CD8-positive, alpha-beta T cell (primary cell): ENCODE measurements at regions of chr18 and their contacts with region 1.

Region 1: GRCh38 chr18:13539050-13539449 is 187.3 kb downstream of the FAM210A start:
- DNase-seq: peak; percentile 15 to 89 (median 64)
- ATAC-seq: peak; percentile 91
- H3K4me3 ChIP-seq: peak overlapping the region in 1 of 2 experiments; percentile 6
- H3K4me3 Mint-ChIP-seq: peak overlapping the region; percentile 63
- H3K27ac ChIP-seq: peak overlapping the region; percentile 63 to 83
- H3K27ac Mint-ChIP-seq: peak overlapping the region; percentile 91
- H3K4me1 ChIP-seq: peaks cover 66% of the 10 kb centered on the region
- H3K4me1 Mint-ChIP-seq: peaks cover 85% of the 10 kb centered on the region
- H3K27me3 ChIP-seq: no peaks in the 10 kb centered on the region
- H3K27me3 Mint-ChIP-seq: no peaks in the 10 kb centered on the region
- CTCF ChIP-seq: no peak

Region 2: GRCh38 chr18:11607906-11608305 is 1931.1 kb before region 1 on chr18:
- CTCF ChIA-PET with region 1: no interaction called
- POLR2A ChIA-PET with region 1: no interaction called
- intact Hi-C with region 1: no loop called
- DNase-seq: no peak
- ATAC-seq: no peak
- H3K4me3 ChIP-seq: no peak overlapping the region
- H3K4me3 Mint-ChIP-seq: no peak overlapping the region
- H3K27ac ChIP-seq: no peak overlapping the region
- H3K27ac Mint-ChIP-seq: no peak overlapping the region
- H3K4me1 ChIP-seq: no peaks in the 10 kb centered on the region
- H3K4me1 Mint-ChIP-seq: no peaks in the 10 kb centered on the region
- H3K27me3 ChIP-seq: no peaks in the 10 kb centered on the region
- H3K27me3 Mint-ChIP-seq: no peaks in the 10 kb centered on the region
- CTCF ChIP-seq: no peak

Region 3: DNA sequence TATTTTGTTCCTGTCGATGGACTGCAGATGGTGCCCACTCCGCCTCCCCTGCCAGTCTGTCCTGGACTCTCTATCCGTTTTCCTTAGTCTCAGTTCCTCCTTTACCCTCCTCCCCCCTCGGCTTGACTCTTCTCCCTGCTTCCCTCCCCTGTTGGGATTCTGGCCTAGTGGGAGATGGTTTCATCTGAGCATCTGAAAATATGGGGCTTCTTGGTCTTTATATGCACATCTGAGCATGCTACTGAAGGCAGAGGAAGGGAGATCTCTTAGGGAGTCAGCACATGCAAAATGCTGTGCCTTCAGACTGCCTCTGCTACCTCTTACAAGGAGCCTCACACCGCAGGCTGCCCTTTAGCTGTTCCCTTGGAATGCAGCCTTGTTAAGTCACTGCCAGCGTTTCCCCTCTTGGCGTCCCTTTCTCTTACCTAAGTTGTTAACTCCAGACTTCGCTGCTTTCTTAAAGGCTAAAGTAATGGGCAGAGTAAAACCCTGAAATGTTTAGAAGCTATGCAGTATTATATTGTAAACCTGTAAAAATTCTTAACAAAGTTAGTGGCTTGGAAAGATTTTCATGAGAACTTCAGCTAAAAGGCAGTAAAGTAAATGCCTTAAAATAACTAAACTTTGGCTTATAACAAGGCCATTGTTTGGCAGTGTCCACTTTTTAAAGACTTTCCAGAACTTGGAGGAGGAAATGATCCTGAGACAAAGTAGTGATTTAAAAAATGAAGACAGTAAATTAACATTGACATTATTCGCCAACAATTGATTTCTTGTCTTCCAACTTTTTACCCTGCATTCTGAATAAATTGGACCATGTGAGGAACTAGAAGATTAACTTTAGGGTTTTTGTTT is 270.7 kb before region 1 on chr18:
- CTCF ChIA-PET with region 1: no interaction called
- POLR2A ChIA-PET with region 1: no interaction called
- intact Hi-C with region 1: loop called in 1 of 2 experiments (anchors 5 kb)
- DNase-seq: peak in 1 of 9 experiments; percentile 32
- ATAC-seq: no peak
- H3K4me3 ChIP-seq: no peak overlapping the region
- H3K4me3 Mint-ChIP-seq: no peak overlapping the region
- H3K27ac ChIP-seq: no peak overlapping the region
- H3K27ac Mint-ChIP-seq: peak overlapping the region; percentile 64
- H3K4me1 ChIP-seq: peaks cover 43% of the 10 kb centered on the region
- H3K4me1 Mint-ChIP-seq: peaks cover 65% of the 10 kb centered on the region
- H3K27me3 ChIP-seq: no peaks in the 10 kb centered on the region
- H3K27me3 Mint-ChIP-seq: no peaks in the 10 kb centered on the region
- CTCF ChIP-seq: no peak